ENCODE measurements at regions of chr22 and their contacts with region 1.

Region 1: DNA sequence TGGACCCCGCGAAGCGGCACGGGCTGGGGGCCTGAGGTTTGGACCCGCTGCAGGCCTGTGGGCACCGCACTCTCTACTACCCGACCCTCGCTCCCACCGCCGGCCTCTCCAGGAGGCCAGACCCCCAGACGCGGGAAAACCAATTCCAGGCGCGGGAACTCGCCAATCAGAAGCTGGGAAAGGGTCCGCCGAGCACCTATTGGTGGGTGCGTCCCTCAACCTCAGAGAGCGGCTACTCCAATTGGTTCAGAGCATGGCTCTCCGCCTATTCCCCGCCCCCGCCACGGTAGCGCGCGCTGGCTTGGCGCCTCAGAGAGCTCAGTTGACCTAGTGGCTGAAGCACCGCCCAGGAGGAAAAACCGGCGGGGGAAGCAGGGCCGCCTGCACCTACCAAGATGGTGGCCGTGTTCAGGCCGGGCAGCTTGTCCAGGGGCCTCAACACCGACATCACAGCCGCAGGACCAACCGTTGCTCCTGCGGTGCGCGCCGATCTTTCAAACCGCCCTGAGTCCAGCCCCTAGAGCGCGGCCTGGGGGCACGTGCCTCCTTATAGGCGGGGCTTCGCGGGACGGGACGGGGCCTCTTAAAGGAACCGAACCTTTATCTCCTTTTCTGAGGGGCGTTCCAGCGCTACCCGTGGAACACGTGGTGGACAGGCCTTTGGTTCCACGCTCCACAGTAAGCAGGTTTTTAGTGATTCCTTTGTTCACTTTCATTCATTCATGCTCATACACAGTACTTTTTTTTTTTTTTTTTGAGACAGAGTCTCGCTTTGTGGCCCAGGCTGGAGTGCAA is at the start of gene CENPM:
- DNase-seq: peak; percentile 94
- H3K4me3 Mint-ChIP-seq: peak within 1 kb of the TSS; percentile 88
- H3K27ac Mint-ChIP-seq: peak within 1 kb of the TSS; percentile 85
- H3K4me1 Mint-ChIP-seq: peaks cover 55% of the 10 kb centered on the region
- H3K27me3 Mint-ChIP-seq: no peaks in the 10 kb centered on the region
- total RNA-seq, gene CENPM: 71.8 to 81.2 TPM

Region 2: DNA sequence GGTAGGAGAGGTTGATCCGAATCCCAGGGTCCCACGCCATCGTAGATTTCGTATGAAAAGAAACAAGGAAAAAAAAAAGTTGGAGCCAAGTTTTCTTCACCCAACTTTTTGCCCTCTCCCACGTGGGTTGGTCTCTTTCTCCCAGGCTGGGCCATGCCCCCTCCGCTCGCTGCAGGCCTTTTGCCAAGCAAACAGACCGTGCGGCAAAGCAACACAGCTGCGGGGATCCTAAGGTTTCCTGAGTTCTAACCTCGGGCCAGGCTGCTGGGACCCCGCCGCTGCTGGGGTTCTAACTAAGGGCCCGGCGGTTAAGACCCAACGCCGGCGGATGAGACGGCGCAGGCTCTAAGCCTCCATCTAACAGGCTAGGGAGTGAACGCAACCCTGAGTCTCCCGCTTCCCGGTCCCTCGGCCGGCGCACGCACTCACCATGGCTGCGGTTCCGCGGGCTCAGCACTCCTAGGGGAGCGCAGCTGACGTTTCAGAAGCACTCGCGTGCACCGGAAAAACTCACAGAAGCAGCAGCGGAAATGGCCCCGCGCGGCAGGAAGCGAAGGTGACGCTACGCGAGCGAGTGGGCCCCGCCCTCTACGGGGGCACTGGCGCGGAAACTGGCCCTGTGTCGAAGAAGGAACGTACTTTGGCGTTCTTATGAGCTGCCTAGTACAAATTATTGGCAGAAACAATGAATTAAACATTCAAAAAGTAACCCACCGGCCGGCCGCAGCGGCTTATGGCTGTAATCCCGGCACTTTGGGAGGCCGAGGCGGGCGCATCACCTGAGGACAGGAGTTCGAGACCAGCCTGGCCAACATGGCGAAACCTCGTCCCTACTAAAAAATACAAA is 258.2 kb before region 1 on chr22 and contains the start of gene SNU13:
- CTCF ChIA-PET with region 1: no interaction called
- POLR2A ChIA-PET with region 1: interaction called, 25 read pairs
- DNase-seq: peak; percentile 95
- H3K4me3 Mint-ChIP-seq: peak within 1 kb of the TSS; percentile 95
- H3K27ac Mint-ChIP-seq: peak within 1 kb of the TSS; percentile 92
- H3K4me1 Mint-ChIP-seq: peaks cover 40% of the 10 kb centered on the region
- H3K27me3 Mint-ChIP-seq: no peaks in the 10 kb centered on the region
- total RNA-seq, gene SNU13: 166 to 176 TPM

Region 3: DNA sequence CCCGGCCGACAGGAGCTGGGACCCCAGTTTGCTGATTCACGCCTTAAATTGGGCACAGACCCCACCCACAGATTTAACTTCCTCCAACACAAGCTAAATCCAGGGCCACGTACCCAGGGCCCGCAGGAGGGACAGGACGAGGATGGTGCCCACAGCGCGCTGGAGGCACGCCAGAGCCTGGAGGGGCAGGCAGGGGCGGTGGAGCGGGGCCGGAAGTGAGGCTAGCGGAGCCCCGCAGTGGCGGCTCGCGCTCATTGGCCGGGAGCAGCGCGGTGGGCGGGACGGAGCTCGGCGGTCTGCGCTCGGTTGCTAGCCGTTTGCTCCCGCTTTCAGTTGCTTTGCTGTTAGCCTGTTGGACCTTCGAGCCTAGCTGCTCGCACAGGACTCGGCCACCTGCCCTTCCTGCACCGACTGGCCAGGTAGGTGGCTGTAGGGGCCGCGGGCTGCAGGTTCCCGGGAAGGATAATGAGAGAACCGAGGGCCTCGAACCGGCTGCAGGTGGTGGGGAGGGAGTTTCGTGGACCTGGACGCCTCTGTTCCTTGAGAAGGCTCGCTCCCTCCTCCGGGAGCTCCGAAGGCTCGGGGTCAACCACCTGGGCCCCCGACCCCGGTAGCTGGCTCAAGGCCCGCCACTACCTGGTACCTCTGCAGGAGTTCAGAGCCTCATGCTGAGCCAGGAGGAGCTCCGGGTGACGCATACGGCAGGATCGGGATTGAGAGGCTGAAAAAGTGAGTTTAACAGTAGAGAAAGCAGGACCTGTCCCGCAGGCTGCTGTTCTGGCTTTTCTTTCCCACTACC is 146.3 kb before region 1 on chr22 and contains the start of gene CCDC134:
- CTCF ChIA-PET with region 1: interaction called, 7 read pairs
- POLR2A ChIA-PET with region 1: interaction called, 29 read pairs
- DNase-seq: peak; percentile 93
- H3K4me3 Mint-ChIP-seq: peak within 1 kb of the TSS; percentile 91
- H3K27ac Mint-ChIP-seq: peak within 1 kb of the TSS; percentile 90
- H3K4me1 Mint-ChIP-seq: peaks cover 44% of the 10 kb centered on the region
- H3K27me3 Mint-ChIP-seq: no peaks in the 10 kb centered on the region
- total RNA-seq, gene CCDC134: 17.9 to 20.3 TPM

Region 4: GRCh38 chr22:41957941-41958556 is 11.2 kb after region 1 on chr22:
- CTCF ChIA-PET with region 1: interaction called, 17 read pairs
- POLR2A ChIA-PET with region 1: interaction called, 7 read pairs
- DNase-seq: no peak
- H3K4me3 Mint-ChIP-seq: no peak overlapping the region
- H3K27ac Mint-ChIP-seq: no peak overlapping the region
- H3K4me1 Mint-ChIP-seq: peaks cover 4% of the 10 kb centered on the region
- H3K27me3 Mint-ChIP-seq: no peaks in the 10 kb centered on the region

Region 5: GRCh38 chr22:42090596-42091454 is 144.0 kb after region 1 on chr22 and contains the start of gene NDUFA6:
- CTCF ChIA-PET with region 1: interaction called, 9 read pairs
- POLR2A ChIA-PET with region 1: interaction called, 38 read pairs
- DNase-seq: peak; percentile 99
- H3K4me3 Mint-ChIP-seq: peak within 1 kb of the TSS; percentile 99
- H3K27ac Mint-ChIP-seq: peak within 1 kb of the TSS; percentile 99
- H3K4me1 Mint-ChIP-seq: peaks cover 31% of the 10 kb centered on the region
- H3K27me3 Mint-ChIP-seq: no peaks in the 10 kb centered on the region
- total RNA-seq, gene NDUFA6: 94.8 to 97.1 TPM